GM12878 (cell line): ENCODE measurements at regions of chr6 and their contacts with region 1.

Region 1: GRCh38 chr6:305371-306206 is 13.3 kb downstream of the DUSP22 start:
- DNase-seq: peak; percentile 97
- ATAC-seq: peak; percentile 84
- H3K4me3 ChIP-seq: peak overlapping the region; percentile 26; the same call in 1 of the 2 replicates
- H3K27ac ChIP-seq: peak overlapping the region; percentile 100
- H3K4me1 ChIP-seq: peaks cover 77% of the 10 kb centered on the region
- H3K27me3 ChIP-seq: no peaks in the 10 kb centered on the region
- CTCF ChIP-seq: no peak
- EP300 ChIP-seq: peak; percentile 100
- POLR2A ChIP-seq: no peak
- RAD21 ChIP-seq: peak; percentile 30; the same call in 1 of the 2 replicates

Region 2: GRCh38 chr6:217048-217659 is 88.4 kb before region 1 on chr6:
- CTCF ChIA-PET with region 1: interaction called, 4 read pairs
- POLR2A ChIA-PET with region 1: interaction called, 5 read pairs
- RAD21 ChIA-PET with region 1: interaction called, 10 read pairs
- SMC1A ChIA-PET with region 1: interaction called, 12 read pairs
- in situ Hi-C with region 1: no loop called
- intact Hi-C with region 1: no loop called
- DNase-seq: peak; percentile 55
- ATAC-seq: 0 out of 3 replicates have a peak, but pooled peaks have one; percentile 1
- H3K4me3 ChIP-seq: peak overlapping the region; percentile 13; the same call in 1 of the 2 replicates
- H3K27ac ChIP-seq: peak overlapping the region; percentile 94
- H3K4me1 ChIP-seq: peaks cover 86% of the 10 kb centered on the region
- H3K27me3 ChIP-seq: no peaks in the 10 kb centered on the region
- CTCF ChIP-seq: peak; percentile 57 to 73 (median 73)
- EP300 ChIP-seq: no peak
- POLR2A ChIP-seq: no peak
- RAD21 ChIP-seq: peak; percentile 54

Region 3: DNA sequence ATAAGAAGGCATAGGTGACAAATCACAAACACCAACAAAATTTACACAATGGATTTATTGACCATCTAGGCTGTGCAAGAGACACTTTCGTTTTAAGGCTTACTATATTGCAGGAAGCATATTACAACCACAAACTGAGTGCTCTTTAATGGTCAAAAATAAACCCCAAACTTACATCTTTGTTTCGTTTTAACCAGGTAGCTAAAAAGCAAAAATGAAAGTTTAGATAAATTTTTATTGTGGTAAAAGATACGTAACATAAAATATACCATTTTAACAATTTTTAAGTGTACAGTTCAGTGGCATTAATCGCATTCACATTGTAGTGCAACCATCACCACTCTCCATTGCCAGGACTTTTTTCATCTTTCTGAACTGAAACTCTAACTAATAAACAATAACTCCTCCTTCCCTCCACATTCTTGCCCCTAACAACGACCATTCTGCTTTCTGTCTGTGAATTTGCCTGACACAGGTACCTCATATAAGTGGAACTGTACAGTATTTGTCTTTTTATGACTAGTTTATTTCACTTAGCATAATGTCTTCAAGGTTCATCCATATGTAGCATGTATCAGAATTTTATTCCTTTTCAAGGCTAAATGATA is 45.6 kb before region 1 on chr6:
- CTCF ChIA-PET with region 1: interaction called, 3 read pairs
- POLR2A ChIA-PET with region 1: interaction called, 4 read pairs
- RAD21 ChIA-PET with region 1: interaction called, 11 read pairs
- SMC1A ChIA-PET with region 1: interaction called, 19 read pairs
- in situ Hi-C with region 1: no loop called
- intact Hi-C with region 1: no loop called
- DNase-seq: peak; percentile 77
- ATAC-seq: peak; percentile 91
- H3K4me3 ChIP-seq: peak overlapping the region; percentile 20
- H3K27ac ChIP-seq: peak overlapping the region; percentile 82
- H3K4me1 ChIP-seq: peaks cover 37% of the 10 kb centered on the region
- H3K27me3 ChIP-seq: no peaks in the 10 kb centered on the region
- CTCF ChIP-seq: no peak
- EP300 ChIP-seq: no peak
- POLR2A ChIP-seq: no peak
- RAD21 ChIP-seq: no peak

Region 4: DNA sequence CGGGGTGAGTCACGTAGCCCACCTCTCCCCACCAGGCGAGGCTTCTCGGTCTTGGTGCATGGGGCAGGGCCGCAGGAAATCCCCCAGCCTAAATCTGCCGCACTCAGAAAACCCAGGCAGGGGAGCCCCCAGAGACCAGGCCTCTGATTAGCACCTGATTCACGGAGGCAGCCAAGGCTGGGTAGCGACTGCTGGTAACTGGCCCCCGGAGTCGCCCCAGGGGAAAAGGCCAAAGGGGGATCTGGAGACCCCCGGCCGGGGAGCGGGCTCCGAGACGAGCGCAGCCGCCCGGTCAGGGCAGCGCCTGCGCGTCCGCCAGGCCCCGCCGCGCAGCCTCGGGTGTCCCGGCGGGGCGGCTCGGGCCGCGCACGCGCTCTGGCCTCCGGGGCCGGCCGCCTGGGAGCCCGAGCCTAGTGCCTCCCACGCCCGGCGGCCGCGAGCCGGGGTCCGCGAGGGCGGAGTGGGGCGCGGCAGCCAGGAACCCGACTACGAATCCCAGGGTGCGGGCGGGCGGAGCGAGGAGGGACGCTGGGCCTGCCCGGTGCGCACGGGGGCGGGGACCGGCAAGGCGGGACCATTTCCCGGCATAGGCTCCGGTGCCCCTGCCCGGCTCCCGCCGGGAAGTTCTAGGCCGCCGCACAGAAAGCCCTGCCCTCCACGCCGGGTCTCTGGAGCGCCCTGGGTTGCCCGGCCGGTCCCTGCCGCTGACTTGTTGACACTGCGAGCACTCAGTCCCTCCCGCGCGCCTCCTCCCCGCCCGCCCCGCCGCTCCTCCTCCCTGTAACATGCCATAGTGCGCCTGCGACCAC is 13.7 kb before region 1 on chr6 and contains the start of gene DUSP22:
- CTCF ChIA-PET with region 1: interaction called, 56 read pairs
- POLR2A ChIA-PET with region 1: interaction called, 67 read pairs
- RAD21 ChIA-PET with region 1: interaction called, 77 read pairs
- SMC1A ChIA-PET with region 1: interaction called, 221 read pairs
- in situ Hi-C with region 1: no loop called
- intact Hi-C with region 1: no loop called
- DNase-seq: peak; percentile 81
- ATAC-seq: peak; percentile 45
- H3K4me3 ChIP-seq: peak within 1 kb of the TSS; percentile 78
- H3K27ac ChIP-seq: peak within 1 kb of the TSS; percentile 100
- H3K4me1 ChIP-seq: peaks cover 64% of the 10 kb centered on the region
- H3K27me3 ChIP-seq: no peaks in the 10 kb centered on the region
- CTCF ChIP-seq: no peak
- EP300 ChIP-seq: peak; percentile 53 to 76; a peak in 2 of 4 replicates
- POLR2A ChIP-seq: no peak
- RAD21 ChIP-seq: peak; percentile 42
- polyA plus RNA-seq, gene DUSP22: 93.4 to 99.7 TPM

Region 5: GRCh38 chr6:347232-347631 is 41.6 kb after region 1 on chr6:
- CTCF ChIA-PET with region 1: interaction called, 5 read pairs
- POLR2A ChIA-PET with region 1: interaction called, 150 read pairs
- RAD21 ChIA-PET with region 1: interaction called, 140 read pairs
- SMC1A ChIA-PET with region 1: interaction called, 140 read pairs
- in situ Hi-C with region 1: no loop called
- intact Hi-C with region 1: no loop called
- DNase-seq: no peak
- ATAC-seq: peak; percentile 68
- H3K4me3 ChIP-seq: peak overlapping the region; percentile 24; the same call in 1 of the 2 replicates
- H3K27ac ChIP-seq: peak overlapping the region; percentile 84
- H3K4me1 ChIP-seq: peaks cover 64% of the 10 kb centered on the region
- H3K27me3 ChIP-seq: no peaks in the 10 kb centered on the region
- CTCF ChIP-seq: peak in 1 of 3 experiments; percentile 9; a peak in 1 of 6 replicates
- EP300 ChIP-seq: no peak; a peak in 1 of 4 replicates
- POLR2A ChIP-seq: no peak
- RAD21 ChIP-seq: peak; percentile 58

Region 6: GRCh38 chr6:364609-365540 is 59.3 kb after region 1 on chr6:
- CTCF ChIA-PET with region 1: interaction called, 5 read pairs
- POLR2A ChIA-PET with region 1: interaction called, 3 read pairs
- RAD21 ChIA-PET with region 1: interaction called, 15 read pairs
- SMC1A ChIA-PET with region 1: interaction called, 18 read pairs
- in situ Hi-C with region 1: no loop called
- intact Hi-C with region 1: no loop called
- DNase-seq: peak; percentile 78
- ATAC-seq: peak; percentile 94
- H3K4me3 ChIP-seq: no peak overlapping the region
- H3K27ac ChIP-seq: peak overlapping the region; percentile 33
- H3K4me1 ChIP-seq: peaks cover 25% of the 10 kb centered on the region
- H3K27me3 ChIP-seq: no peaks in the 10 kb centered on the region
- CTCF ChIP-seq: no peak
- EP300 ChIP-seq: peak; percentile 37 to 88; a peak in 2 of 4 replicates
- POLR2A ChIP-seq: no peak
- RAD21 ChIP-seq: 0 out of 2 replicates have a peak, but pooled peaks have one; percentile 2

Region 7: DNA sequence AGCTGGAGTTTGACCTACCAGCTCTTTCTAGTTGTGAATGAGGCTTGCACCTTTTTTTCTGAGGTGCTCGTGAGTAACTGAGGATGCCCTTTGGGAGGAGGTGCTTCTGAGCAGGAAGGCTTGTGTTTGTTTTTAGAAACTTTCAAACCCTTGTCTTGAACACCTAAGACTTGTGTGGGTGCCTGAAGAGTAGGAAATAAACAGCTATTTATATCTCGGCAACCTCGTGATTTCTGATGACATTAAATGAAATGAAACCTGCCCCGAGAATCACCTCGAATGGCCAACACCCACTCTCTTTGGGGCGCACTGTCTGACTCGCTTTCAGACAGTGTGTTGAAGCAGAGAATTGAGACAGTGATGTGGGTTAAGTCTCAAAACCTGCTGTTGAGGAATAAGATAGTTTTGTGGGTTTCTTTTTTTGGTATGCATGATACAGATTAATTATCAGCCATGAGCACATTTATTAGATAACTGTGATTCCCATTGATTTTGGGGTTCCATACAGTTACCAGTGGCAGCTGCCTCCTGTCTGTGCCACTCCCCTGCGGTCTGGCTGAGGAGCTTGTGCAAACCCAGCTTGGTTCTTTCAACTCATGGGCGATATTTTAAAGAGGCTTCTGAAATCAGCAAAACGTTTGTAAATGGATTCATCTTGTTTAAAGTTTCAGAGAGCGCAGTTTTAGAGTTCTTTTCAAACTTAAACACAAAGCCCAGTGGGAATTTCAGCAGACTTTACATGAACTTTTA is 94.4 kb after region 1 on chr6:
- CTCF ChIA-PET with region 1: interaction called, 3 read pairs
- POLR2A ChIA-PET with region 1: interaction called, 20 read pairs
- RAD21 ChIA-PET with region 1: interaction called, 23 read pairs
- SMC1A ChIA-PET with region 1: interaction called, 9 read pairs
- in situ Hi-C with region 1: no loop called
- intact Hi-C with region 1: no loop called
- DNase-seq: no peak
- ATAC-seq: peak; percentile 10
- H3K4me3 ChIP-seq: peak overlapping the region; percentile 61
- H3K27ac ChIP-seq: peak overlapping the region; percentile 39
- H3K4me1 ChIP-seq: peaks cover 35% of the 10 kb centered on the region
- H3K27me3 ChIP-seq: no peaks in the 10 kb centered on the region
- CTCF ChIP-seq: no peak
- EP300 ChIP-seq: peak; percentile 56 to 84; a peak in 2 of 4 replicates
- POLR2A ChIP-seq: peak; percentile 89
- RAD21 ChIP-seq: 0 out of 2 replicates have a peak, but pooled peaks have one; percentile 1